CD8-positive, alpha-beta T cell (primary cell): ENCODE measurements at regions of chr2 and their contacts with region 1.

Region 1: DNA sequence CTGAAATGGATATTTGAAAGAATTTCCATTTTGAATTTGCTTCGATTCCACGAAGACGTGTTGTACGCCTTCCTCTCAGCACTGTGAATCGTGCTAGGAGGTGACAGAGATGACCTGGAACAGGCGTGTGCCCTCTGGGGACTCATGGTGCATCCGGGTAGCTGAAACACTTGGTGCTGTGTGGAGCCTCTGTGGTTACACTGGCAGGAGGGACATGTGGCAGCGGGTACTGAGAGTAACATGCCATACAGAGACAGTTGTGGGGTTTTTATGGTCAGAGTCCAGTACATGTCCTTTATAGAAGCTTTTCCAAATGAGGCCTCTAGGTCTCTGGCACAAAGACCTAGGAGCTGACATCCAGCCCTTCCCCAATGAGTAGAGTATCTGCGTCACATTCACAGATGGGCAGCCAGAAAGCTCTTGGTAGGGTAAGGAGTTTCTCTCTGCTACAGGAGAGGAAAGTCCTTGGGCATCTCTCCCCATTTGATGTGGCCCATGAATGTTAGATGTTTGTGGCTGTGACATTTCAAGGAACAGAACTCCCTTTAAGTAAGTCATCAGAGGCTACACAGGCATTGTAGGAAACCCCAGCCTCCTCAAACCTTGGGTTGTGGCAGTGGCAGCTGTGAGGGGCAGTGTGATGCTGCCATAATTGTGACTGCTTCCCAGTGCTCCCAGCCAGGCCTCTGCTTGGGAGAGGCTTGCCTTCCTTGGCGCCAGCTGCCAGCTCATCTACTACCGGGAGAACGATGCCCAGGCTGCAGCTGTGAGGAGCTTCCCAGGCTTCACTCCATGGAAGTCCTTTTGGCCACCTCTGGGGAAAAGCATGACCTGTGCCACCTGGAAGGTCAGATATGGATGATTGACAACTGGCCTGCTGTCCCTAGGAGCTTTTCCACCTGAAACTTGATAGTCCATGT is 80.6 kb downstream of the ACOXL start:
- DNase-seq: no peak
- ATAC-seq: no peak
- H3K4me3 ChIP-seq: no peak overlapping the region
- H3K4me3 Mint-ChIP-seq: no peak overlapping the region
- H3K27ac ChIP-seq: no peak overlapping the region
- H3K27ac Mint-ChIP-seq: no peak overlapping the region
- H3K4me1 ChIP-seq: peaks cover 4% of the 10 kb centered on the region
- H3K4me1 Mint-ChIP-seq: peaks cover 9% of the 10 kb centered on the region
- H3K27me3 ChIP-seq: no peaks in the 10 kb centered on the region
- H3K27me3 Mint-ChIP-seq: peaks cover 2% of the 10 kb centered on the region
- CTCF ChIP-seq: no peak

Region 2: GRCh38 chr2:110748489-110748867 is 64.5 kb before region 1 on chr2:
- CTCF ChIA-PET with region 1: no interaction called
- POLR2A ChIA-PET with region 1: no interaction called
- intact Hi-C with region 1: no loop called
- DNase-seq: peak in 7 of 9 experiments; percentile 9 to 67 (median 53)
- ATAC-seq: peak; percentile 83
- H3K4me3 ChIP-seq: no peak overlapping the region
- H3K4me3 Mint-ChIP-seq: peak overlapping the region; percentile 9
- H3K27ac ChIP-seq: no peak overlapping the region
- H3K27ac Mint-ChIP-seq: peak overlapping the region; percentile 1
- H3K4me1 ChIP-seq: peaks cover 11% of the 10 kb centered on the region
- H3K4me1 Mint-ChIP-seq: peaks cover 13% of the 10 kb centered on the region
- H3K27me3 ChIP-seq: peaks cover 0 to 2% of the 10 kb centered on the region in 2 experiments
- H3K27me3 Mint-ChIP-seq: peaks cover 18% of the 10 kb centered on the region
- CTCF ChIP-seq: no peak

Region 3: DNA sequence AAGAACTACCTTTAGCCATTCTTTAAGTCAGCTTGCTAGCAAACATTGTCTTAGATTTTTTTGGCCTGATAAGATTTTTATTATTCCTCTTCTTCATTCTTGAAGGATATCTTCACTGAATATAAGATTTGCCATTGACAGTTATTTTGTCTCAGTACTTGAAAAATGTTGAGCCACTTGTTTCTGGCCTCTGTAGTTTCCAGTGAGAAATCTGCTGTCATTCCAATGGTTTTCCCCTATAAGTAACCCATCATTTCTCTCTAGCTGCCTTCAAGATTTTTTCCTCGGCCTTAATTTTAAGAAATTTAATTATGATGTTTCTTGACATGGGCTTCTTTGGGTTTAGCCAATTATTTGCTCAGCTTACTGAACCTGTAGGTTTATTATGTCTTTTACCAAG is 48.1 kb before region 1 on chr2:
- CTCF ChIA-PET with region 1: no interaction called
- POLR2A ChIA-PET with region 1: no interaction called
- intact Hi-C with region 1: no loop called
- DNase-seq: no peak
- ATAC-seq: no peak
- H3K4me3 ChIP-seq: no peak overlapping the region
- H3K4me3 Mint-ChIP-seq: no peak overlapping the region
- H3K27ac ChIP-seq: no peak overlapping the region
- H3K27ac Mint-ChIP-seq: no peak overlapping the region
- H3K4me1 ChIP-seq: no peaks in the 10 kb centered on the region
- H3K4me1 Mint-ChIP-seq: no peaks in the 10 kb centered on the region
- H3K27me3 ChIP-seq: no peaks in the 10 kb centered on the region
- H3K27me3 Mint-ChIP-seq: peaks cover 7% of the 10 kb centered on the region
- CTCF ChIP-seq: no peak

Region 4: GRCh38 chr2:110828330-110828729 is 15.3 kb after region 1 on chr2:
- CTCF ChIA-PET with region 1: interaction called, 29 read pairs
- POLR2A ChIA-PET with region 1: no interaction called
- intact Hi-C with region 1: no loop called
- DNase-seq: no peak
- ATAC-seq: no peak
- H3K4me3 ChIP-seq: no peak overlapping the region
- H3K4me3 Mint-ChIP-seq: no peak overlapping the region
- H3K27ac ChIP-seq: no peak overlapping the region
- H3K27ac Mint-ChIP-seq: no peak overlapping the region
- H3K4me1 ChIP-seq: peaks cover 8% of the 10 kb centered on the region
- H3K4me1 Mint-ChIP-seq: peaks cover 18% of the 10 kb centered on the region
- H3K27me3 ChIP-seq: no peaks in the 10 kb centered on the region
- H3K27me3 Mint-ChIP-seq: no peaks in the 10 kb centered on the region
- CTCF ChIP-seq: no peak

Region 5: GRCh38 chr2:110843959-110844510 is 31.0 kb after region 1 on chr2:
- CTCF ChIA-PET with region 1: interaction called, 13 read pairs
- POLR2A ChIA-PET with region 1: no interaction called
- intact Hi-C with region 1: no loop called
- DNase-seq: no peak
- ATAC-seq: no peak
- H3K4me3 ChIP-seq: no peak overlapping the region
- H3K4me3 Mint-ChIP-seq: no peak overlapping the region
- H3K27ac ChIP-seq: no peak overlapping the region
- H3K27ac Mint-ChIP-seq: no peak overlapping the region
- H3K4me1 ChIP-seq: peaks cover 33% of the 10 kb centered on the region
- H3K4me1 Mint-ChIP-seq: peaks cover 60% of the 10 kb centered on the region
- H3K27me3 ChIP-seq: no peaks in the 10 kb centered on the region
- H3K27me3 Mint-ChIP-seq: no peaks in the 10 kb centered on the region
- CTCF ChIP-seq: no peak

Region 6: DNA sequence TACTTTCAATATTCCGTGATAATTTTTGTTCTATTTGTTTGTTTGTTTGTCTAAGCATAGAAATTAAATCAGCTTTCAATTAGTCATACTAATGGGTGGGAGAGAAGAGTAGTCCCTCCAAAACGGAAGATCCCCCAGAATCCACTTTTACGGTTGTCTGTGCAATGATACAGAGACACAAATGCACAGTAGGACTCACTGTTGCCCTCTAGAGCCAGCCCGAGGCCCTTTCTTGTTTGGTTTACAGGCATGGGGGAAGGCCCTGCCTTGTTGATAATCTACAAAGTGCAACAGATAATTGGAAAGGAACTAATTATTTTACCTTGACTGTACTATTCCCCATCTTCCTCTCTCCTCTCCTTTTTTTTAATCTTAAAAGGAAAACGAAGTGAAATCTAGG is 40.5 kb after region 1 on chr2:
- CTCF ChIA-PET with region 1: interaction called, 61 read pairs
- POLR2A ChIA-PET with region 1: no interaction called
- intact Hi-C with region 1: loop called (anchors 1 to 2 kb)
- DNase-seq: peak in 7 of 9 experiments; percentile 37 to 84 (median 67)
- ATAC-seq: no peak
- H3K4me3 ChIP-seq: no peak overlapping the region
- H3K4me3 Mint-ChIP-seq: peak overlapping the region; percentile 12
- H3K27ac ChIP-seq: no peak overlapping the region
- H3K27ac Mint-ChIP-seq: peak overlapping the region; percentile 87
- H3K4me1 ChIP-seq: peaks cover 44% of the 10 kb centered on the region
- H3K4me1 Mint-ChIP-seq: peaks cover 64% of the 10 kb centered on the region
- H3K27me3 ChIP-seq: no peaks in the 10 kb centered on the region
- H3K27me3 Mint-ChIP-seq: no peaks in the 10 kb centered on the region
- CTCF ChIP-seq: peak; percentile 67

Region 7: GRCh38 chr2:110858993-110859701 is 46.2 kb after region 1 on chr2:
- CTCF ChIA-PET with region 1: interaction called, 61 read pairs
- POLR2A ChIA-PET with region 1: no interaction called
- intact Hi-C with region 1: no loop called
- DNase-seq: peak in 2 of 9 experiments; percentile 21 to 51
- ATAC-seq: no peak
- H3K4me3 ChIP-seq: peak overlapping the region; percentile 19 to 24
- H3K4me3 Mint-ChIP-seq: peak overlapping the region; percentile 70
- H3K27ac ChIP-seq: peak overlapping the region; percentile 49 to 59
- H3K27ac Mint-ChIP-seq: peak overlapping the region; percentile 94
- H3K4me1 ChIP-seq: peaks cover 36% of the 10 kb centered on the region
- H3K4me1 Mint-ChIP-seq: peaks cover 47% of the 10 kb centered on the region
- H3K27me3 ChIP-seq: no peaks in the 10 kb centered on the region
- H3K27me3 Mint-ChIP-seq: no peaks in the 10 kb centered on the region
- CTCF ChIP-seq: no peak

Region 8: GRCh38 chr2:110876243-110876999 is 63.4 kb after region 1 on chr2:
- CTCF ChIA-PET with region 1: interaction called, 22 read pairs
- POLR2A ChIA-PET with region 1: no interaction called
- intact Hi-C with region 1: no loop called
- DNase-seq: peak in 1 of 9 experiments; percentile 30
- ATAC-seq: no peak
- H3K4me3 ChIP-seq: no peak overlapping the region
- H3K4me3 Mint-ChIP-seq: peak overlapping the region; percentile 74
- H3K27ac ChIP-seq: no peak overlapping the region
- H3K27ac Mint-ChIP-seq: peak overlapping the region; percentile 77
- H3K4me1 ChIP-seq: peaks cover 33% of the 10 kb centered on the region
- H3K4me1 Mint-ChIP-seq: peaks cover 29% of the 10 kb centered on the region
- H3K27me3 ChIP-seq: no peaks in the 10 kb centered on the region
- H3K27me3 Mint-ChIP-seq: no peaks in the 10 kb centered on the region
- CTCF ChIP-seq: no peak

Region 9: GRCh38 chr2:111135910-111136297 is 322.9 kb after region 1 on chr2:
- CTCF ChIA-PET with region 1: interaction called, 7 read pairs
- POLR2A ChIA-PET with region 1: no interaction called
- intact Hi-C with region 1: loop called in 1 of 2 experiments (anchors 5 kb)
- DNase-seq: peak in 2 of 9 experiments; percentile 17 to 30
- ATAC-seq: no peak
- H3K4me3 ChIP-seq: no peak overlapping the region
- H3K4me3 Mint-ChIP-seq: no peak overlapping the region
- H3K27ac ChIP-seq: no peak overlapping the region
- H3K27ac Mint-ChIP-seq: no peak overlapping the region
- H3K4me1 ChIP-seq: peaks cover 4% of the 10 kb centered on the region
- H3K4me1 Mint-ChIP-seq: peaks cover 18% of the 10 kb centered on the region
- H3K27me3 ChIP-seq: no peaks in the 10 kb centered on the region
- H3K27me3 Mint-ChIP-seq: no peaks in the 10 kb centered on the region
- CTCF ChIP-seq: no peak